HAP-1 (cell line): ENCODE measurements at regions of chr12 and their contacts with region 1.

Region 1: DNA sequence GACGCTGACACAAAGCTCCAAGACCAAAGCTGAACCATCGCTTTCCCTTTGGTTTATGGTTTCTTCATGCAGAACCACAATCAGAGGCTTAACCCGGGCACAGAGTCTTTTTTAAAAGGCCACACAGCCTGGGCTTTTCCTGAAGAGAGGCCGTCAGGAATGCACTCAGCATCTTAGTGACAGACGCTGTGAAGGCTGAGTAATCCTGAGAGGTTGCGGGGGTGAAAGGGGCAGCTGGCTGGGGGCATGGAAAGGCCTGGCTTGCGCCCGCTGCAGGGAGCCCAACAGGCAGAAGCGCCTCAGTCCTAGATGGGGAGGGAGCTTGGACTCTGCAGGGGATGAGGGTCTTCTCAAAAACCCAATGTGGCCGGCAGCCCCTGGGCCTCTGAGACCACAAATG is 13.6 kb downstream of the CTDSP2 start:
- DNase-seq: no peak
- H3K4me3 ChIP-seq: no peak overlapping the region
- H3K4me1 ChIP-seq: peaks cover 21% of the 10 kb centered on the region
- H3K27me3 ChIP-seq: no peaks in the 10 kb centered on the region

Region 2: DNA sequence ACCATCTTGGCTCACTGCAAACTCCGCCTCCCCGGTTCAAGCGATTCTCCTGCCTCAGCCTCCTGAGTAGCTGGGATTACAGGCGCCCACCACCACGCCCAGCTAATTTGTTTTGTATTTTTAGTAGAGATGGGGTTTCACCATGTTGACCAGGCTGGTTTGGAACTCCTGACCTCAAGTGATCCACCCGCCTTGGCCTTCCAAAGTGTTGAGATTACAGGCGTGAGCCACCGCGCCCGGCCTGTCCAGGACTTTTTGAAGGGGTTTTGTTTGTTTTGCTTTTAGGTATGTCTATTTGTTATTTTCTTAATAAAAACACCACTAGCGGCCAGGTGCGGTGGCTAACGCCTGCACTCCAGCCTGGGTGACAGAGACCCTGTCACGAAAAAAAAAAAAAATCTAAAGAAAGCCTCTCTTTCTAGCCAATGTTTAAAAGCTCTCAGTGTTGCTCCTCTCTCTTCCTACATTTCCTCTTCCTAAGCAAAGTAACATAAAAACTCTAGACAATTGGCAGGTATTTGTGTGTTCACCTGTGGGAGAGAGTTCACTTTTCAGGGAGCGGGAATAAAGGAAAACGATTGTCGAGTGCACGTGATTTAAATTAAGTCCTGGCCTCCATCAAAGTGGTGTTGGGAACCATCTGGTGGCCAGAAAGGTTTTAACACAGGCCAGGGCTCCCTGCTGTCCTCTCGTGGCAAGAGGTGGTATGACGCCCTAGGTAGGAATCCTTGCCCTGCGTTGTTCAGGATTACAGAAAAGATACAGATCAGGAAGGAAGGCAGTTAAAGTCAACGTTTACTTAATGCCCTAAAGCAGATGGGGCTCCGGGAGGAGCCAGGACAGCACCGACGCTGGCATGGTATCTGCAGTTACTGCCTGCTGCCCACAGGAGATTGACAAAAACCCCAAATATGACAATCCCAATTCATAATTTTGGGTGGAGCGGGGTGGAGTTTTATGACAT is 72.2 kb after region 1 on chr12:
- in situ Hi-C with region 1: loop called (anchors 5 kb)
- DNase-seq: peak; percentile 86 to 90
- H3K4me3 ChIP-seq: no peak overlapping the region
- H3K4me1 ChIP-seq: peaks cover 2% of the 10 kb centered on the region; the same call in 1 of the 2 replicates
- H3K27me3 ChIP-seq: no peaks in the 10 kb centered on the region